Heart left ventricle (tissue), 16 donors: ENCODE measurements at regions of chr3 and their contacts with region 1.

Region 1: DNA sequence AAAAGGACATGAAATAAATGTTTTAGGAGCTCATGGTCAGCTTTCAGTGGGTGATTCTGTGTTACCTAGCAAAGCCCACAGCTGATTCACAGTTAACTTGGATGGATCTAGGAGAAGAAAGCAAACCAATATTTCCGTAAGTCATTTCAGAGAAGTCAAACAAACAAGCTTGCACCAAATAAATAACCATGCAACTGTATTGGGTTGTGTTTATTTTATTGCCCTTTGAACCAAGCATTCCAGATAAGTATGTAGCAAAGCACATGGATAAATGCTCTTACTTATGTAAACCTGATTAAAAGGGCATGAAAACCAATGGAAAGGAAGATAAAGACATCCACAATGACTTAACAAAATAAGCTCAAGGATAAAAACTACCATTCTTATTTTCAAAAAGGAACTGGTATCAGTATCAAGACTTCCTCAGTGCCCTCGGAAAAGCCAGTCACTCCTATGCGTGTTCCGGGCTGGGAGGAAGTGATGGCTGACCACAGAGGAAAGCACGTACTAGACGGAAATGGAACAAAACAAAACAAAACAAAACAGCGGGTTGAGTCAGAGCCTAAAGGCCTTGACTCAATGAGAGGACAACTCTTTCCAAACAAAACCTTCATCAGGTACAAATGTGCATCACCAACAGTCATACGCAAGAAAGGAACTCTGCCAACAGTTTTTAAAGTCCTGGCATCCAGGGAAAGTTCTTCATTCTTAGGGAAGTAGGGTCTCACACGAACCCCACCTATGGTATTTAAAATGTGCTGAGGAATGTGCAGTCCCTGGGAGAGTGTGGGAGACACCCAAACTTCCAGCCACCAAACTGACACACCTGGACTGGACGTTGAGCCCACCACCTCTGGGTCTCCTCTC is 103.3 kb downstream of the SNRK start:
- DNase-seq: peak in 4 of 5 donors; percentile 58 to 67 (median 59)
- ATAC-seq: peak; percentile 42 to 82 (median 76)
- H3K4me3 ChIP-seq: no peak overlapping the region
- H3K27ac ChIP-seq: peak overlapping the region; percentile 50 to 92 (median 72)
- H3K4me1 ChIP-seq: peaks cover 0 to 51% (median 30%) of the 10 kb centered on the region in 12 donors
- H3K27me3 ChIP-seq: no peaks in the 10 kb centered on the region
- CTCF ChIP-seq: no peak
- POLR2A ChIP-seq: no peak

Region 2: GRCh38 chr3:43162230-43163084 is 227.2 kb before region 1 on chr3:
- intact Hi-C with region 1: loop called in 1 of 10 experiments (anchors 10 kb)
- DNase-seq: no peak
- ATAC-seq: peak in 3 of 4 donors; percentile 51 to 81 (median 65)
- H3K4me3 ChIP-seq: peak overlapping the region in 7 of 12 donors; percentile 3 to 19 (median 11)
- H3K27ac ChIP-seq: peak overlapping the region in 7 of 12 donors; percentile 38 to 73 (median 59)
- H3K4me1 ChIP-seq: peaks cover 0 to 16% (median 10%) of the 10 kb centered on the region in 12 donors
- H3K27me3 ChIP-seq: no peaks in the 10 kb centered on the region
- CTCF ChIP-seq: peak; percentile 30 to 68 (median 57)
- POLR2A ChIP-seq: no peak

Region 3: DNA sequence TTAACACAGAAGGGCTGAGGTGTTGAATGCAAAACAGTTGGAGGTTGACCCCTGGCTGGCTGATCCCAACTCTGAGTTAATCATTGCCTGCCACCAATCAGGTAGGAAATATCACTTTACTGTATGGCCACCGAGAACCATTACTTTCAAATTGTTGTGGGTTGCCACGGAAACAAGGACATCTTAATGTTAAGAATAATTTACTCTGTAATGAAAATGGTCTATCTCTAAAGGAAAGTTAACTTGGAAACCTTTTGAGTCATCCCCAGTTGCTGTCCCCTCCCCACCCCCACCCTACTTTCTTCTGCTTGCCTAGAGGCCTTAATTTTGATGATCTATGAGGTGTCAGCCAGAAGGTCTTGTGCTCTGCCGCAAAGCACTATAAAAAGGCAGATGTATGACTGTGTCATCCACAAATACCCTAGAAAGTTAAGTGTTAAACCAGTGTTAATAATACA is 182.0 kb before region 1 on chr3:
- intact Hi-C with region 1: no loop called
- DNase-seq: no peak
- ATAC-seq: no peak
- H3K4me3 ChIP-seq: no peak overlapping the region
- H3K27ac ChIP-seq: no peak overlapping the region
- H3K4me1 ChIP-seq: peaks cover 0 to 27% (median 9%) of the 10 kb centered on the region in 12 donors
- H3K27me3 ChIP-seq: no peaks in the 10 kb centered on the region
- CTCF ChIP-seq: no peak
- POLR2A ChIP-seq: no peak

Region 4: GRCh38 chr3:43223670-43224364 is 165.8 kb before region 1 on chr3:
- intact Hi-C with region 1: loop called in 1 of 10 experiments (anchors 5 kb)
- DNase-seq: no peak
- ATAC-seq: no peak
- H3K4me3 ChIP-seq: no peak overlapping the region
- H3K27ac ChIP-seq: no peak overlapping the region
- H3K4me1 ChIP-seq: peaks cover 0 to 2% (median 0%) of the 10 kb centered on the region in 12 donors
- H3K27me3 ChIP-seq: no peaks in the 10 kb centered on the region
- CTCF ChIP-seq: peak; percentile 25 to 63 (median 46)
- POLR2A ChIP-seq: no peak

Region 5: GRCh38 chr3:43442872-43443395 is 53.3 kb after region 1 on chr3:
- intact Hi-C with region 1: loop called in 1 of 10 experiments (anchors 2 kb)
- DNase-seq: no peak
- ATAC-seq: no peak
- H3K4me3 ChIP-seq: no peak overlapping the region
- H3K27ac ChIP-seq: no peak overlapping the region
- H3K4me1 ChIP-seq: no peaks in the 10 kb centered on the region
- H3K27me3 ChIP-seq: no peaks in the 10 kb centered on the region
- CTCF ChIP-seq: no peak
- POLR2A ChIP-seq: no peak

Region 6: DNA sequence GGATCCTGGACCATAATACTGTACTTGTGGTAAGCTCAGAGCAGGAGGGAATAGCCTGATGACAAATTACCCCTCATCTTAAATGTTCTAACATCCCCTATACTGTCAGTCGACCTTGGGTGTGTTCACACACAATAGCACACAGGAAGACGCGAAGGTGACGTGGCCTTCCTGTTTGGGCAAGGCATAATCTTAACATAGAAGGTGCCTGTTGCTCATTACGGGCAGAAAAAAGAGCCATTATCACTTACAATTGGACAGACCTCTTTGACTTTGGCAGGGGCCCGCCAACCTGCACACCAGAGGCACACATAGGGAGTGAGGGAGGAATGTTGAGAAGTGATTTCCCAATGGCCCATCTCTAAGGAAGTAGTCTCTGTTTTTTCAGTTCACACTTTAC is 88.0 kb after region 1 on chr3:
- intact Hi-C with region 1: loop called in 2 of 10 experiments (anchors 5 to 10 kb)
- DNase-seq: peak in 4 of 5 donors; percentile 27 to 61 (median 48)
- ATAC-seq: peak; percentile 42 to 97 (median 73)
- H3K4me3 ChIP-seq: no peak overlapping the region
- H3K27ac ChIP-seq: peak overlapping the region in 10 of 12 donors; percentile 38 to 80 (median 58)
- H3K4me1 ChIP-seq: peaks cover 0 to 21% (median 6%) of the 10 kb centered on the region in 12 donors
- H3K27me3 ChIP-seq: no peaks in the 10 kb centered on the region
- CTCF ChIP-seq: no peak
- POLR2A ChIP-seq: no peak

Region 7: GRCh38 chr3:43497905-43498365 is 108.3 kb after region 1 on chr3:
- intact Hi-C with region 1: loop called in 5 of 10 experiments (anchors 5 to 10 kb)
- DNase-seq: no peak
- ATAC-seq: peak in 3 of 4 donors; percentile 38 to 63 (median 41)
- H3K4me3 ChIP-seq: no peak overlapping the region
- H3K27ac ChIP-seq: peak overlapping the region in 6 of 12 donors; percentile 11 to 58 (median 50)
- H3K4me1 ChIP-seq: peaks cover 0 to 44% (median 19%) of the 10 kb centered on the region in 12 donors
- H3K27me3 ChIP-seq: no peaks in the 10 kb centered on the region
- CTCF ChIP-seq: no peak
- POLR2A ChIP-seq: no peak

Region 8: GRCh38 chr3:43870120-43870519 is 480.5 kb after region 1 on chr3:
- intact Hi-C with region 1: no loop called
- DNase-seq: no peak
- ATAC-seq: peak in 1 of 4 donors; percentile 35
- H3K4me3 ChIP-seq: no peak overlapping the region
- H3K27ac ChIP-seq: no peak overlapping the region
- H3K4me1 ChIP-seq: no peaks in the 10 kb centered on the region
- H3K27me3 ChIP-seq: peaks cover 0 to 9% (median 0%) of the 10 kb centered on the region in 9 donors
- CTCF ChIP-seq: no peak
- POLR2A ChIP-seq: no peak